Sciatic nerve (tissue), 2 donors: ENCODE measurements at regions of chrX and their contacts with region 1.

Region 1: DNA sequence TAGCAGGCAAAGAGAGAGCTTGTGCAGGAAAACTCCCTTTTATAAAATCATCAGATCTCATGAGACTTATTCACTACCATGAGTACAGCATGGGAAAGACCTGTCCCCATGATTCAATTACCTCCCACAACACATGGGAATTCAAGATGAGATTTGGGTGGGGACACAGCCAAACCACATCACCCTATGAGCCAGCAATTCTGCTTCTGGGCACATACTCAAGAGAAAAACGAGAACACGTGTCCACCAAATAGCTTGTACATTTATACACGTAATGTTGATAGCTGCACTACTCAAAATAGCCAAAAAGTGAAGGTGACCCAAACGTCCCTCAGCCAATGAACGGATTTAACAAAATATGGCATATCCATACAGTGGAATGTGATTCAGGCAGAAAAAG is 94.5 kb upstream of the DHRSX start:
- DNase-seq: no peak
- ATAC-seq: no peak

Region 2: DNA sequence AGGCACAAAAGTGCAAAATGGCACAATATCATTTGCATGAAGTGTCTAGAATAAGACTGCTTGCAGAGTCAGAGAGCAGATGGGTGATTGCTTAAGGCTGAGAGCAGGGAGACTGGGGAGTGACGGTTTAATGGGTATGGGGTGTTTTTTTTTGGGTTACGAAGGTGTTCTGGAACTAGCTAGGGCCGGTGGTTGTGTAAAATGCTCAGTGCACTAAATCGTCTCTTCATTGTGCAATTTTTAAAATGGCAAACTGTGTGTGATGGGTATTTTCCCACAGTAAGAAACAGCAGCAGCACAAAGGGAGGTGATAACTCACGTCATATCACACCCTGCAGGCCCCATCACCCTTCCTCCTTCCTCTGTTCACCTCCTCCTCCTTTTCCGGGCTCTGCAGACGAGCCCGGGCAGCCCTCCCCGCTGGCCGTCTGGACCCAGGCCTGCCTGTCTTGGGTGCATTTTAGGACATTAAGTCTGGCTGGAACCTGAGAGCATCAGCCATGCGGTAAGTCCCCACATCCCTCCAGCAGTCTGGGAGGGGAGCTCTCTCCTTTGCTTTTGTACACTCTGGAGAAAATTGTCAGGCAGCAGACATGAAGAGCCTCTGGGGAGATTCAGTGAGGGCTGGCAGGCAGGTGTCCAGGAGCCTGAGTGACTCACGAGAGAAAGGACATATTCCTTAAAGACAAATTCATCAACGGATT is 937.7 kb before region 1 on chrX:
- intact Hi-C with region 1: loop called (anchors 10 kb)
- DNase-seq: no peak
- ATAC-seq: no peak